Right ventricle myocardium inferior (tissue), 1 donor: ENCODE measurements at regions of chr7 and their contacts with region 1.

Region 1: GRCh38 chr7:32942786-32943653 is 14.2 kb upstream of the FKBP9 start:
- DNase-seq: peak; percentile 93
- ATAC-seq: peak; percentile 97

Region 2: GRCh38 chr7:32803406-32804141 is 139.4 kb before region 1 on chr7:
- intact Hi-C with region 1: loop called (anchors 5 kb)
- DNase-seq: no peak
- ATAC-seq: no peak

Region 3: DNA sequence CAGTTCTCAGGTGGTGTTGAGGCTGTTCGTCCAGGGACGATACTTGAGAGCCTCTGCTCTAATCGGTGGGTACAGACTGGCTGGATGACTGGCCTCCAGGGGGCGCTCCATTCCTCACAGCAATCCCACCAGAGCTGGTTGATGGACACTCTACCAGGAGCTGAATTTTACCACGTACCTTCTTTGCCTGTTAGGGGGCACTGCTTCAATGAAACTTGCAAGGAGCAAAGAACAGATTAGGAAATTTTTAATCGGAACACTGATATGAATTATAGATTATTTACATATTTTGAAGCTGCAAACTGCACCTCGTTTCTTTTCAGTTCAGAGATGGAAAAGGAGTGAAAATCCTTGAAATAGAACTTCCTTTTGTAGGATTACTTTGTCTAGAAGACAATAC is 96.3 kb before region 1 on chr7:
- intact Hi-C with region 1: loop called (anchors 2 kb)
- DNase-seq: peak; percentile 92
- ATAC-seq: peak; percentile 99

Region 4: GRCh38 chr7:32891800-32892520 is 51.1 kb before region 1 on chr7:
- intact Hi-C with region 1: loop called (anchors 1 kb)
- DNase-seq: peak; percentile 99
- ATAC-seq: peak; percentile 89

Region 5: GRCh38 chr7:32957326-32958045 is 14.5 kb after region 1 on chr7 and contains the start of gene FKBP9:
- intact Hi-C with region 1: loop called (anchors 2 kb)
- DNase-seq: peak; percentile 91
- ATAC-seq: peak; percentile 97
- total RNA-seq, gene FKBP9: 124 TPM

Region 6: GRCh38 chr7:33062782-33063443 is 119.9 kb after region 1 on chr7:
- intact Hi-C with region 1: loop called (anchors 5 kb)
- DNase-seq: peak; percentile 96
- ATAC-seq: peak; percentile 99

Region 7: DNA sequence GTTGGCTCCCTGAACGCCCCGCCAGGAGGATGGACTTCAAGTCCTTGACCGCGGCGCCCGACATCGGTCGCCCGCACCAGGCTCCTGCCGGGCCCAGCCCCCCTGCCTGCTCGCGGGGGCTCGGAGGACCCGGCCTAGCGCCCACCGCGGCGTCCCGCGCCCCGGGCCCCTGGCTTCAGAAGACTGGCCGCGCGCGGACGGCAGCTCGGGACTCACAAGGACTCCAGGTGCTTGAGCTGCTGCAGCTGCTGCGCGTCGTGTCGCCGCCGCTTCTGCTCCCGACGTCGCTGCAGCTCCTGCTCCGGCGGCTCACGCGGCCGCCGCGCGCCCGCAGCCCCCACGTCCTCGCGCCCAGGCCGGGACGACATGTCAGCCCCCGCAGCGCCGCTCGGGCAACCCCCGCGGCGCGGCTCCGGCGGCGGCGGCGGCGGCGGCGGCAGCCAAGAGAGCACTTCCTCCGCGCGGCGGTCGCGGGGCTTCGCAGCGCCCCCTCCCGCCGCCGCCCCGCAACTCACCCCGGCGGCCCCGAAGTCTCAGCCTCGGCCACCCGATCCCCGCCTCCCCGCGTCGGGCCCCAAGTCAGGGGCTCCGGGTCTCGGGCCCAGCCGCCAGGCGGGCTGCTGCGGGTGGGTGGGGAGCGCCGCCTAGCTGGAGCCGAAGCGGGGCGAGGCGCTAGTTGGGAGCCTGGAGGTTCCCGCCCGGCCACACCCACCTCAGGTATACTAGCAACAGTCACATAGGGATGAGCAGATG is 166.2 kb after region 1 on chr7 and contains the start of gene RP9:
- intact Hi-C with region 1: loop called (anchors 5 kb)
- DNase-seq: peak; percentile 88
- ATAC-seq: peak; percentile 89
- total RNA-seq, gene RP9: 20.0 TPM